Activated naive CD4-positive, alpha-beta T cell treated with anti-CD3 and anti-CD28 coated beads for 36 hours (primary cell): ENCODE measurements at regions of chr3 and their contacts with region 1.

Region 1: DNA sequence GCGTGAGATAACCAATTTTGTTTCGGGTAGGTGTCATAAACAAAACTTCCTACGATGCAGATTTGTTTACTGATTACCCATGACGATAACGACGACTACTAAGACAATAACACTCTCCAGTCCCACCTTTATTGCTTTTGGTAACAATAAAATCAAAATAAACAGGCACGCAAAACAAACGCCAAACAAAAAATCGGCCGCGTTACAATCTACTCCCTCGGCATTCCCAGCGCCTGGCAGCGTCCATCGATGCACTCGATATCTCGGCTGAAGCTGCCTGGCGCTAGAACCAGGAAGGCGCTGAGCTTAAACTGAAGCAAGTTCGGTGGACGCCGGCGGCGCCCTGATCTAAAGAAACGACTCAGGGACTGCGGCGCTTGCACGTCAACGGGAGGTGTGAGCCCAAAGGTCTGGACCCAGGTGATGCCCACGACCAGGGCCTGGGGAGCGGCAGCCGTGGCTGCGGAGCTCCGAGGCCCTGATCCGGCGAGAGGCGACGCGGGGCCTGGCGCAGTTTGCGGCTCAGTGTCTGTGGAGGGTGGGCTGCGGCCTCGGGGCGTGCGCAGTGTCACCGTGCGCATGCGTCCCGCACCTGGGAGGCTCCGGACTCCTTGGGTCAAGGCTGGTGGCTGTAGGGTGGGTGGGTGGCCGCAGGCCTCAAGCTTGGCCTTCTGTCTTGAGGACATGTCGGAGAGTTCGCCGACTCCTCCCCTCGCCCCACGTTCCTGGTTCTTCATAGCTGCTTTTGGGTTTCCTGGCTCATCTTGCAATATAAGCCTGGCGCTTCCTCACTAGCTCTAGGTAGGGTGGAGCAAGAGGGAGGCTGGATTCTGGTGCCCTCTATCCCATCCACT is at the start of gene RSRC1:
- DNase-seq: peak; percentile 86
- H3K4me3 Mint-ChIP-seq: peak within 1 kb of the TSS; percentile 97
- H3K27ac Mint-ChIP-seq: peak within 1 kb of the TSS; percentile 77
- H3K4me1 Mint-ChIP-seq: peaks cover 58% of the 10 kb centered on the region
- H3K27me3 Mint-ChIP-seq: peaks cover 34% of the 10 kb centered on the region
- total RNA-seq, gene RSRC1: 48.4 to 50.1 TPM

Region 2: GRCh38 chr3:157436583-157437291 is 673.3 kb before region 1 on chr3 and contains the start of gene PTX3:
- CTCF ChIA-PET with region 1: no interaction called
- intact Hi-C with region 1: loop called (anchors 5 kb)
- DNase-seq: peak; percentile 20
- H3K4me3 Mint-ChIP-seq: peak within 1 kb of the TSS; percentile 45
- H3K27ac Mint-ChIP-seq: no peak within 1 kb of the TSS
- H3K4me1 Mint-ChIP-seq: peaks cover 10% of the 10 kb centered on the region
- H3K27me3 Mint-ChIP-seq: peaks cover 22% of the 10 kb centered on the region
- total RNA-seq, gene PTX3: not detected

Region 3: DNA sequence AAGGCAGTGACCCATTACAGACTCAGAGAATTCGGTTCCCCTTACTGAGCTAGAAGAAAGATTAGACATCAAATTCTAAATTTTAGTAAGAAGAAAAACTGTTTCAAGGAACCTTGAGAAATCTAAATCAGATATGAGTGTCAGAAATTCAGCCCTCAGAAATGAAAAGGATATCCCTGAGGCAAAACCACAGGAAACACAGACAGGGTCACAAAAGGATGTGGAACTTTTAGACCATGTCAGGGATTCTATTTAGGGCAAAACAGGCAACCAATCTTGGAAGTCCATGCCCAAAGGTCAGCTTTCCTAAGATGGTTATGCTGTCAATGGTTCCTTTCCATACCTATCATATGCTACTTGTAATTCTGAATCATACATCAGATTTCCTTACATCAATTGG is 35.4 kb before region 1 on chr3:
- CTCF ChIA-PET with region 1: no interaction called
- intact Hi-C with region 1: no loop called
- DNase-seq: no peak
- H3K4me3 Mint-ChIP-seq: no peak overlapping the region
- H3K27ac Mint-ChIP-seq: no peak overlapping the region
- H3K4me1 Mint-ChIP-seq: no peaks in the 10 kb centered on the region
- H3K27me3 Mint-ChIP-seq: peaks cover 20% of the 10 kb centered on the region

Region 4: DNA sequence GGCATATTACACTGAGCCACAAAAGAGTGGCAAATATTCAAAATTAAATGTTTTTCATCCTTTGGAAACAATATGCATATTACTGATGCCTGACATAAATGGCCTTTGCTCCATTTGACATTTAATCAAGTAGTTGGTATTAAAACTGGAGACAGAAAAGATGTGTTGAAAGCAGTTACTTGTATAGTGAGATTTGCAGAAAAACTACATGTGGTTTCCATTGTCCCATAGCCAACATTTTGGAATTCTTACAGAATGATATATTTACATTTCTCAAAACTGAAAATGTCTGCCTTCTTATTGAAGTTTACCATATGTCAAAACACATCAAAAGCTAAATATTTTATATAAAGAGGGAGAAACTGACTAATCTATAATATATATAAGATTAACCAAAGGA is 25.4 kb before region 1 on chr3:
- CTCF ChIA-PET with region 1: no interaction called
- intact Hi-C with region 1: no loop called
- DNase-seq: no peak
- H3K4me3 Mint-ChIP-seq: no peak overlapping the region
- H3K27ac Mint-ChIP-seq: no peak overlapping the region
- H3K4me1 Mint-ChIP-seq: no peaks in the 10 kb centered on the region
- H3K27me3 Mint-ChIP-seq: peaks cover 27% of the 10 kb centered on the region

Region 5: GRCh38 chr3:158097593-158098308 is 12.3 kb before region 1 on chr3:
- CTCF ChIA-PET with region 1: interaction called, 5 read pairs
- intact Hi-C with region 1: loop called (anchors 1 kb)
- DNase-seq: peak; percentile 78
- H3K4me3 Mint-ChIP-seq: peak overlapping the region; percentile 91
- H3K27ac Mint-ChIP-seq: peak overlapping the region; percentile 53
- H3K4me1 Mint-ChIP-seq: peaks cover 14% of the 10 kb centered on the region
- H3K27me3 Mint-ChIP-seq: peaks cover 81% of the 10 kb centered on the region

Region 6: GRCh38 chr3:158434412-158435038 is 324.5 kb after region 1 on chr3:
- CTCF ChIA-PET with region 1: interaction called, 4 read pairs
- intact Hi-C with region 1: loop called (anchors 5 kb)
- DNase-seq: peak; percentile 63
- H3K4me3 Mint-ChIP-seq: no peak overlapping the region
- H3K27ac Mint-ChIP-seq: no peak overlapping the region
- H3K4me1 Mint-ChIP-seq: no peaks in the 10 kb centered on the region
- H3K27me3 Mint-ChIP-seq: no peaks in the 10 kb centered on the region

Region 7: GRCh38 chr3:158801696-158802408 is 691.8 kb after region 1 on chr3 and contains the start of gene MFSD1:
- CTCF ChIA-PET with region 1: no interaction called
- intact Hi-C with region 1: loop called (anchors 5 kb)
- DNase-seq: peak; percentile 92
- H3K4me3 Mint-ChIP-seq: peak within 1 kb of the TSS; percentile 84
- H3K27ac Mint-ChIP-seq: peak within 1 kb of the TSS; percentile 44
- H3K4me1 Mint-ChIP-seq: peaks cover 21% of the 10 kb centered on the region
- H3K27me3 Mint-ChIP-seq: no peaks in the 10 kb centered on the region
- total RNA-seq, gene MFSD1: 4.8 to 5.7 TPM